ENCODE measurements at regions of chr18 and their contacts with region 1.

Region 1: GRCh38 chr18:35005963-35006577 is 35.1 kb upstream of the MAPRE2 start:
- DNase-seq: no peak
- H3K4me3 ChIP-seq: no peak overlapping the region
- CTCF ChIP-seq: peak; percentile 31

Region 2: DNA sequence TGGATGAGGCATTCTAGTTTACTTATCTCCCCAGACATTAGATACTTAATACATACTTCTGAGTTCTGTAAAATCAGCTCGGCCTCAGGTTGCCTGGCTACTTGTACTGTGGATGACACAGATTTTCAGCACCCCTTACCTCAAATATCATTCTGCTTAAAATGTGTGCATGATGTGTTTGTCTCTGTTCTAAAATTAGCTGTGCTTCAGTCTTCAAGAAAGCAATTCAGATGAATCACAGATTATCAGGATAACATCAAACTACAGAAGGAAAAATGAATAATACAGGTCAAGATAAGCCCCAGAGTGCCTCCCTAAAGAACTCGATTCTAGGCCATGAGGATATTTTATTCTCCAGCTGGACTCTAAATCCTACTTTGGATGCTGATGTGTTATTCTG is 13.9 kb after region 1 on chr18:
- CTCF ChIA-PET with region 1: interaction called, 10 read pairs
- POLR2A ChIA-PET with region 1: no interaction called
- DNase-seq: no peak
- H3K4me3 ChIP-seq: no peak overlapping the region
- CTCF ChIP-seq: no peak

Region 3: GRCh38 chr18:35127201-35127600 is 121.1 kb after region 1 on chr18:
- CTCF ChIA-PET with region 1: interaction called, 11 read pairs
- POLR2A ChIA-PET with region 1: no interaction called
- DNase-seq: no peak
- H3K4me3 ChIP-seq: no peak overlapping the region
- CTCF ChIP-seq: peak; percentile 39

Region 4: GRCh38 chr18:35132021-35132902 is 126.2 kb after region 1 on chr18:
- CTCF ChIA-PET with region 1: interaction called, 19 read pairs
- POLR2A ChIA-PET with region 1: no interaction called
- DNase-seq: no peak
- H3K4me3 ChIP-seq: no peak overlapping the region
- CTCF ChIP-seq: no peak